ENCODE measurements at regions of chr1 and their contacts with region 1.

Region 1: GRCh38 chr1:57424231-57425027 is 569 bp upstream of the DAB1 start:
- DNase-seq: peak; percentile 92
- H3K4me3 ChIP-seq: peak overlapping the region; percentile 91
- H3K27ac ChIP-seq: peak overlapping the region; percentile 88
- H3K4me1 ChIP-seq: peaks cover 26% of the 10 kb centered on the region
- H3K27me3 ChIP-seq: no peaks in the 10 kb centered on the region
- CTCF ChIP-seq: peak; percentile 96

Region 2: DNA sequence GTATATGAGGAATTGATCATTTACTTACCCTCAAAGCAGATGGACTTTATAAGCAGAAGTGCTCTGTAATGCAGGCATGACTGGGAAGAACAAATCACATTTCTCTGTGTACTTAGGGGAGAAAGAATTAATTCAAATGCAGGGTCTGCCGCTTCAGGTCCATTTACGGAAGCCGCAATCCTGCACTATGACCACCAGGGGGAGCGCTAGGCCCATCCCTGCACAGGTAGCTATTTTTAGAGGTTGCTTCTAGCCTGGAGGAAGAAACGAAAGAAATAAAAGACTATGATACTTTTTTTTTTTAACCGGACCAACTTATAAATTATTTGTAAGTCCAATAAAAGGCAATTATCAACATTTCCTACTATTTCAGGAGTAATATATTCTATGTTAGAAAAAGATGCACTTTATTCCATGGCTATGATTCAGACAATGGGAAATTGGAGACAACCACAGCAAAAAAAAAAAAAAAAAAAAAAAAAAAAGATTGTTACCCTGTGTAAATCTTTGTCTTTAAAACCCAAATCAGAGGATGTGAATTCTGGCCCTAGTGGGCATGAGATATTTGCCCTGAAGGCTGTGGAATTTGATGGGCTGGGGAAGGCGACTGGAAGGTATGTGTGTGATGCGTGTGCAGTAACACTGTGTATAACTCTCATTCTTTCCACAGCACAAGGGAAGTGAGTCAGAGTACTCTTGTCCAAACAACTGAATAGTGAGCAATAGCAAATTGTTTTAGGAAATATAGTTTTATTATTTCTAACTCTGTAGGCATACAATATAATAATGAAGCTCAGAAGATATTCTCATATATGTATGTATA is 592.3 kb before region 1 on chr1:
- CTCF ChIA-PET with region 1: interaction called, 3 read pairs
- POLR2A ChIA-PET with region 1: no interaction called
- intact Hi-C with region 1: loop called (anchors 2 kb)
- DNase-seq: peak; percentile 86
- H3K4me3 ChIP-seq: no peak overlapping the region
- H3K27ac ChIP-seq: no peak overlapping the region
- H3K4me1 ChIP-seq: peaks cover 10% of the 10 kb centered on the region
- H3K27me3 ChIP-seq: no peaks in the 10 kb centered on the region
- CTCF ChIP-seq: peak; percentile 97

Region 3: GRCh38 chr1:57576756-57577155 is 152.3 kb after region 1 on chr1:
- CTCF ChIA-PET with region 1: no interaction called
- POLR2A ChIA-PET with region 1: no interaction called
- intact Hi-C with region 1: no loop called
- DNase-seq: no peak
- H3K4me3 ChIP-seq: no peak overlapping the region
- H3K27ac ChIP-seq: no peak overlapping the region
- H3K4me1 ChIP-seq: peaks cover 5% of the 10 kb centered on the region
- H3K27me3 ChIP-seq: no peaks in the 10 kb centered on the region
- CTCF ChIP-seq: no peak

Region 4: GRCh38 chr1:57623039-57623790 is 198.8 kb after region 1 on chr1:
- CTCF ChIA-PET with region 1: no interaction called
- POLR2A ChIA-PET with region 1: no interaction called
- intact Hi-C with region 1: loop called (anchors 5 kb)
- DNase-seq: peak; percentile 98
- H3K4me3 ChIP-seq: no peak overlapping the region
- H3K27ac ChIP-seq: peak overlapping the region; percentile 82
- H3K4me1 ChIP-seq: peaks cover 68% of the 10 kb centered on the region
- H3K27me3 ChIP-seq: no peaks in the 10 kb centered on the region
- CTCF ChIP-seq: no peak

Region 5: GRCh38 chr1:58035523-58035922 is 611.1 kb after region 1 on chr1:
- CTCF ChIA-PET with region 1: interaction called, 3 read pairs
- POLR2A ChIA-PET with region 1: no interaction called
- intact Hi-C with region 1: loop called (anchors 10 kb)
- DNase-seq: peak; percentile 70
- H3K4me3 ChIP-seq: no peak overlapping the region
- H3K27ac ChIP-seq: no peak overlapping the region
- H3K4me1 ChIP-seq: peaks cover 14% of the 10 kb centered on the region
- H3K27me3 ChIP-seq: no peaks in the 10 kb centered on the region
- CTCF ChIP-seq: peak; percentile 66

Region 6: GRCh38 chr1:58652651-58653184 is 1228.3 kb after region 1 on chr1:
- CTCF ChIA-PET with region 1: interaction called, 13 read pairs
- POLR2A ChIA-PET with region 1: no interaction called
- intact Hi-C with region 1: no loop called
- DNase-seq: peak; percentile 87
- H3K4me3 ChIP-seq: no peak overlapping the region
- H3K27ac ChIP-seq: no peak overlapping the region
- H3K4me1 ChIP-seq: peaks cover 4% of the 10 kb centered on the region
- H3K27me3 ChIP-seq: no peaks in the 10 kb centered on the region
- CTCF ChIP-seq: peak; percentile 86